Activated T-helper 1 cell treated with anti-CD3 and anti-CD28 coated beads, Interleukin-12 subunit alpha, Interleukin-12 subunit beta, Interleukin-2, Interleukin-4 antibody, amounts not matched to agents 30 ng/mL and 10 ng/mL and 1 ng/mL, durations not matched to agents 14 hours and 24 hours and 36 hours (primary cell): ENCODE measurements at regions of chr5 and their contacts with region 1.

Region 1: GRCh38 chr5:170745481-170746071 is 37.9 kb upstream of the GABRP start:
- DNase-seq: no peak
- H3K4me3 Mint-ChIP-seq: no peak overlapping the region
- H3K27ac Mint-ChIP-seq: no peak overlapping the region
- H3K4me1 Mint-ChIP-seq: no peaks in the 10 kb centered on the region
- H3K27me3 Mint-ChIP-seq: peaks cover 8% of the 10 kb centered on the region

Region 2: GRCh38 chr5:170791325-170791954 is 45.9 kb after region 1 on chr5:
- intact Hi-C with region 1: loop called (anchors 2 kb)
- DNase-seq: no peak
- H3K4me3 Mint-ChIP-seq: no peak overlapping the region
- H3K27ac Mint-ChIP-seq: no peak overlapping the region
- H3K4me1 Mint-ChIP-seq: no peaks in the 10 kb centered on the region
- H3K27me3 Mint-ChIP-seq: peaks cover 2% of the 10 kb centered on the region